Heart right ventricle (tissue), 16 donors: ENCODE measurements at regions of chr13 and their contacts with region 1.

Region 1: GRCh38 chr13:30114571-30115256 is 192.6 kb downstream of the KATNAL1 start:
- DNase-seq: peak; percentile 85 to 91
- ATAC-seq: peak; percentile 81 to 90 (median 87)
- H3K4me3 ChIP-seq: peak overlapping the region in 9 of 10 donors; percentile 51 to 69 (median 58)
- H3K27ac ChIP-seq: peak overlapping the region in 4 of 10 donors; percentile 22 to 53 (median 32)
- H3K4me1 ChIP-seq: peaks cover 0 to 30% (median 21%) of the 10 kb centered on the region in 9 donors
- H3K27me3 ChIP-seq: peaks cover 0 to 23% (median 10%) of the 10 kb centered on the region in 7 donors
- CTCF ChIP-seq: peak; percentile 75 to 95 (median 88)

Region 2: DNA sequence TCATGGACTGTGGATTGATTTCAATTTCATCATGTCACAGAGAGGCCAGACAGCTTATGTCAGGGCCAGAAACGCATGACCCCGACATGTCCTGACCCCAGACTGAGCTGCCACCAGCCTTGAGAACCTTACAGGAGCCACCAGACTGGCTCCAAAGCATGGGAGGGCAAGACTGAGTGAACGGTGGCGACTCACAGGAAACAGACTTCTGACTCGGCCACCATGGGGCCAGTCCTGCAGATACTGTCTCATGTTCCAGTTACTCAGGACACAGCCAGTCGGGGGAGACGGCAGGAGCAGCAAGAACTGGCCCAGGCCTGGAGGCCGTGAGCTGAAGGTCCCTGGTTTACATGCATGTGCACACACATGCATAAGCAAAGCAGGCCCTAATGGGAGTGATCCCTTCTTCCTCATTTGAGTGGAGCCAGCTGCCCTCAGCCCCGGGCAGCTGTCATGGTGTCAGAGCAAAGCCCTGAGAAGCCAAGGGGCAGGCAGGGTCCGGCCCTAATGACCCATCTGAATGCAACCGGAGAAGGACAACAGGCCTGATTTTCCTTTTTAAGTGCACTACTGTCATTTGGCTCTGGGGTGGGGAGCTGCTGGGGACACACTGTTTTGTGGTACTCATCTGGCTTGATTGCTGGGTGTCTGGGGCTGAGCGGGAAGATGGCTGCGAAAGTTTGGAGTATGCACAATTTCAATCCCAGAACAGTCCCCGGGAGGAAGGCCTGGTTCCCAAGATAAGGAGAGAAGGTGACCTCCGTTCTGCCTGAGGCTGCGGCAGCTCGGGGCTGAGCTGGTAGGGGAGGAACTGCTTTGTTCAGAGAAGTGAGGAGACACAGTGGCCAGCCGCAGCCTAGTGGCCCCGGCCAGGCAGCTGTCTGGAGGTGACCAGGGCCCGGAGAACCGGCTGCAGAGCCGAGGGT is 601.1 kb before region 1 on chr13:
- intact Hi-C with region 1: loop called (anchors 1 to 5 kb)
- DNase-seq: no peak
- ATAC-seq: peak in 5 of 8 donors; percentile 36 to 59 (median 56)
- H3K4me3 ChIP-seq: no peak overlapping the region
- H3K27ac ChIP-seq: peak overlapping the region in 2 of 10 donors; percentile 15 to 16
- H3K4me1 ChIP-seq: peaks cover 2 to 17% (median 7%) of the 10 kb centered on the region in 9 donors
- H3K27me3 ChIP-seq: no peaks in the 10 kb centered on the region
- CTCF ChIP-seq: no peak

Region 3: DNA sequence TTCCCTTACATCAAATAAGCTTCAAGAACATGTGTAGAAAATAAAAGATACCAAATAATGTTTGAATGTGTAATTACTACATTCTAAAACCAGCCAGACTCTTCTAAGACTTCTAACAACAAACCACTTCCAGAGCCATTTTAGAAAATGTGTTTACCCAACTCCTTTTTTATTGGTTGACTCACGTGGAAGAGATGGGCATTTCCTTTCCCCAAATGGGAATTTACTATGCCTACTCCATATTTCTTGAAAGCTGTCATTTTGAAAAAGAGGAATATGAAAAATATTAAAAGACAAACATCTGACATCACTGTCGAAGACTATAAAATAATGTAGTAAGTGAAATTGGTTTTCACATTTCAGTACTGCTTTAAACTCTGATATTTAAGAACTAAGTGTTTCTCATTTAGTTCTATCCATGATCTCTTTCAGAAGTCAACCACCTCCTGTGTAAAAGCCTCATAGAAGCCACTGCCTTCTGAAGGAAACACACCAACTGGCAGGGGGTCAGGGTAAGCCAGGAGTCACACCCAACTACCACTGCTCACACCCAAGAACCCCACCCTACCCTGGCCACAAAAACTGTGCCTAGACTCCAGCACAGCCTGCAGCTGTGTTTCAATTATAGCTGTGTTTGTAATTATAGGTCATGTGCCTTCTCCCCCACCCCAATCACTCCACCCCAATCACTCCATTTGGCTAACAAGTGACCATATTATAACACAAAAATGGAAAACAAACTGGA is 351.1 kb before region 1 on chr13:
- intact Hi-C with region 1: loop called in 1 of 10 experiments (anchors 5 kb)
- DNase-seq: no peak
- ATAC-seq: no peak
- H3K4me3 ChIP-seq: no peak overlapping the region
- H3K27ac ChIP-seq: no peak overlapping the region
- H3K4me1 ChIP-seq: peaks cover 0 to 6% (median 0%) of the 10 kb centered on the region in 9 donors
- H3K27me3 ChIP-seq: no peaks in the 10 kb centered on the region
- CTCF ChIP-seq: no peak

Region 4: GRCh38 chr13:29771247-29771646 is 343.5 kb before region 1 on chr13:
- intact Hi-C with region 1: loop called (anchors 2 to 5 kb)
- DNase-seq: no peak
- ATAC-seq: no peak
- H3K4me3 ChIP-seq: no peak overlapping the region
- H3K27ac ChIP-seq: no peak overlapping the region
- H3K4me1 ChIP-seq: no peaks in the 10 kb centered on the region
- H3K27me3 ChIP-seq: no peaks in the 10 kb centered on the region
- CTCF ChIP-seq: peak; percentile 17 to 70 (median 59)

Region 5: DNA sequence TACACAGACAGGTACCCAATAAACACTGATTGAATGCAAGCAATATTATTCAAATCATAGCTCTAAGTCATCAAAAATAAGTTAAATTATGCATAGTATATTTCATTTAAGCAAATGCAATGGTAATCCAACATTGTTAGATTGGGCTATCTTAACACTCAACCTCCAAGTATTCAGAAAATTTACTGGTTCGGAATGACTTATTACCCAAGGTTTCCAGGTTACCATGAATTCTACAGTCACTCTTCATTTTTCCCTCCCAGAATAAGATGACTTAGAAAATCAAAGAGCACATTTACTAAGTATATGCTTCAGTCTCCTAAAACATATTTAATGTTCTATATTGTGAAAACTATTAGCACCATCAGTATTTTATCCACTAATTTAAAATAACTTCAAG is 270.3 kb before region 1 on chr13:
- intact Hi-C with region 1: loop called in 8 of 10 experiments (anchors 2 to 5 kb)
- DNase-seq: no peak
- ATAC-seq: no peak
- H3K4me3 ChIP-seq: no peak overlapping the region
- H3K27ac ChIP-seq: no peak overlapping the region
- H3K4me1 ChIP-seq: peaks cover 4 to 59% (median 39%) of the 10 kb centered on the region in 9 donors
- H3K27me3 ChIP-seq: no peaks in the 10 kb centered on the region
- CTCF ChIP-seq: no peak

Region 6: GRCh38 chr13:29850224-29850898 is 264.4 kb before region 1 on chr13 and contains the start of gene UBL3:
- intact Hi-C with region 1: loop called in 8 of 10 experiments (anchors 2 to 5 kb)
- DNase-seq: peak; percentile 96 to 97
- ATAC-seq: peak; percentile 95 to 99 (median 98)
- H3K4me3 ChIP-seq: peak within 1 kb of the TSS; percentile 62 to 98 (median 92)
- H3K27ac ChIP-seq: peak within 1 kb of the TSS; percentile 94 to 99 (median 98)
- H3K4me1 ChIP-seq: peaks cover 0 to 40% (median 19%) of the 10 kb centered on the region in 9 donors
- H3K27me3 ChIP-seq: no peaks in the 10 kb centered on the region
- CTCF ChIP-seq: no peak
- total RNA-seq, gene UBL3: 18.3 to 24.3 (median 21.0) TPM

Region 7: GRCh38 chr13:30088312-30088855 is 26.3 kb before region 1 on chr13:
- intact Hi-C with region 1: no loop called
- DNase-seq: no peak
- ATAC-seq: no peak
- H3K4me3 ChIP-seq: no peak overlapping the region
- H3K27ac ChIP-seq: no peak overlapping the region
- H3K4me1 ChIP-seq: no peaks in the 10 kb centered on the region
- H3K27me3 ChIP-seq: peaks cover 0 to 9% (median 0%) of the 10 kb centered on the region in 7 donors
- CTCF ChIP-seq: no peak